Activated CD8-positive, alpha-beta T cell treated with anti-CD3 and anti-CD28 coated beads for 36 hours (primary cell): ENCODE measurements at regions of chr6 and their contacts with region 1.

Region 1: GRCh38 chr6:25556516-25556915 is 95.5 kb upstream of the SCGN start:
- DNase-seq: peak; percentile 90
- ATAC-seq: peak; percentile 66
- H3K4me3 Mint-ChIP-seq: no peak overlapping the region
- H3K27ac Mint-ChIP-seq: no peak overlapping the region
- H3K4me1 Mint-ChIP-seq: peaks cover 2% of the 10 kb centered on the region
- H3K27me3 Mint-ChIP-seq: no peaks in the 10 kb centered on the region
- CTCF ChIP-seq: peak; percentile 80

Region 2: DNA sequence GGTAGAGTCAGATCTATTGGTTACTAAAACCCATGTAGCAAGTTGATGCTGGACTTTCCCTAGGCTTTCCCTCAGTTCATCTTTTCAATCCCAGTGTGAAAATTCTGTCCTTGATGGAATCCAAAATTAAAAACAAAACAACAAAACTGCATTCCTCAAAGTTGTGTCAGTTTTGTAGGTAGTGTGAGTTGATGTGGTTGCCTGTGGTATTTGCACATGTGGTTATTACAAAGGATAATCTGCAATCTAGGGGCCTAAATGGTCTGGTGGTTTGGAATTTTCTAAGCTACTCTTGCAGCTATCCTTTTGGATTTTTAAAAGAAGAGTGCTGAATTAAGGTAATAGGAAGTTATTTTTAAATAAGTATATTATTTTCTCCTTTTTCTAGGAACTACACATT is 36.7 kb before region 1 on chr6:
- CTCF ChIA-PET with region 1: interaction called, 12 read pairs
- POLR2A ChIA-PET with region 1: interaction called, 3 read pairs
- intact Hi-C with region 1: no loop called
- DNase-seq: no peak
- ATAC-seq: no peak
- H3K4me3 Mint-ChIP-seq: no peak overlapping the region
- H3K27ac Mint-ChIP-seq: no peak overlapping the region
- H3K4me1 Mint-ChIP-seq: no peaks in the 10 kb centered on the region
- H3K27me3 Mint-ChIP-seq: no peaks in the 10 kb centered on the region
- CTCF ChIP-seq: no peak

Region 3: GRCh38 chr6:25579902-25580495 is 23.5 kb after region 1 on chr6:
- CTCF ChIA-PET with region 1: interaction called, 12 read pairs
- POLR2A ChIA-PET with region 1: no interaction called
- intact Hi-C with region 1: no loop called
- DNase-seq: no peak
- ATAC-seq: no peak
- H3K4me3 Mint-ChIP-seq: no peak overlapping the region
- H3K27ac Mint-ChIP-seq: no peak overlapping the region
- H3K4me1 Mint-ChIP-seq: peaks cover 8% of the 10 kb centered on the region
- H3K27me3 Mint-ChIP-seq: no peaks in the 10 kb centered on the region
- CTCF ChIP-seq: no peak

Region 4: GRCh38 chr6:25586927-25587326 is 30.4 kb after region 1 on chr6:
- CTCF ChIA-PET with region 1: interaction called, 10 read pairs
- POLR2A ChIA-PET with region 1: no interaction called
- intact Hi-C with region 1: no loop called
- DNase-seq: no peak
- ATAC-seq: no peak
- H3K4me3 Mint-ChIP-seq: no peak overlapping the region
- H3K27ac Mint-ChIP-seq: no peak overlapping the region
- H3K4me1 Mint-ChIP-seq: no peaks in the 10 kb centered on the region
- H3K27me3 Mint-ChIP-seq: no peaks in the 10 kb centered on the region
- CTCF ChIP-seq: no peak